Activated CD4-positive, alpha-beta T cell treated with anti-CD3 and anti-CD28 coated beads for 36 hours (primary cell): ENCODE measurements at regions of chr3 and their contacts with region 1.

Region 1: GRCh38 chr3:181700168-181701087 is 11.3 kb upstream of the SOX2 start:
- DNase-seq: peak; percentile 72
- ATAC-seq: peak; percentile 55
- H3K4me3 Mint-ChIP-seq: no peak overlapping the region
- H3K27ac Mint-ChIP-seq: no peak overlapping the region
- H3K4me1 Mint-ChIP-seq: peaks cover 17% of the 10 kb centered on the region
- H3K27me3 Mint-ChIP-seq: peaks cover 78% of the 10 kb centered on the region

Region 2: GRCh38 chr3:180802837-180803236 is 897.6 kb before region 1 on chr3:
- CTCF ChIA-PET with region 1: no interaction called
- POLR2A ChIA-PET with region 1: no interaction called
- intact Hi-C with region 1: loop called in 1 of 2 experiments (anchors 5 kb)
- DNase-seq: no peak
- ATAC-seq: no peak
- H3K4me3 Mint-ChIP-seq: no peak overlapping the region
- H3K27ac Mint-ChIP-seq: no peak overlapping the region
- H3K4me1 Mint-ChIP-seq: no peaks in the 10 kb centered on the region
- H3K27me3 Mint-ChIP-seq: peaks cover 2% of the 10 kb centered on the region

Region 3: DNA sequence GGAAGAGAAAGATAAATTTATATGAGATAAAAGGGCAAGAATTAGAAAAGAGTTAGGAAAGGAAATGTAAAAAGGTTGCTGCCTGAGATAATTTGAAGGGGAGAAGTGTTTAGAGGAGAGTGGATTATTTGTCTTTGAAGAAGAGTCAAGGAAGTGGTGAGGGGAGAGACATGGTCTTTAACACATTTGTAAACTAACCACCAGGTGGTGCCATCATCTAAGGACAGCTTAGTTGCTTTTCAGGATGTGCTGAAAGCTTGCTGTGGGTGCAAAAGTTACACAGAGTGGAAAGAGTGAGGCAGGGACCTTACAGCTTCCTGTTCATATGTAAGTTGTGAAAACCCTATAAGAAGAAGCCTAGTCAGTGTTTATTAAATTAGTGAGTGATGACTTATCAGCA is 596.8 kb before region 1 on chr3:
- CTCF ChIA-PET with region 1: no interaction called
- POLR2A ChIA-PET with region 1: no interaction called
- intact Hi-C with region 1: loop called in 1 of 2 experiments (anchors 5 kb)
- DNase-seq: peak; percentile 29
- ATAC-seq: peak; percentile 39
- H3K4me3 Mint-ChIP-seq: no peak overlapping the region
- H3K27ac Mint-ChIP-seq: no peak overlapping the region
- H3K4me1 Mint-ChIP-seq: no peaks in the 10 kb centered on the region
- H3K27me3 Mint-ChIP-seq: no peaks in the 10 kb centered on the region

Region 4: GRCh38 chr3:181210275-181210674 is 490.2 kb before region 1 on chr3:
- CTCF ChIA-PET with region 1: interaction called, 4 read pairs
- POLR2A ChIA-PET with region 1: no interaction called
- intact Hi-C with region 1: loop called (anchors 1 to 5 kb)
- DNase-seq: no peak
- ATAC-seq: no peak
- H3K4me3 Mint-ChIP-seq: no peak overlapping the region
- H3K27ac Mint-ChIP-seq: no peak overlapping the region
- H3K4me1 Mint-ChIP-seq: no peaks in the 10 kb centered on the region
- H3K27me3 Mint-ChIP-seq: peaks cover 2% of the 10 kb centered on the region

Region 5: DNA sequence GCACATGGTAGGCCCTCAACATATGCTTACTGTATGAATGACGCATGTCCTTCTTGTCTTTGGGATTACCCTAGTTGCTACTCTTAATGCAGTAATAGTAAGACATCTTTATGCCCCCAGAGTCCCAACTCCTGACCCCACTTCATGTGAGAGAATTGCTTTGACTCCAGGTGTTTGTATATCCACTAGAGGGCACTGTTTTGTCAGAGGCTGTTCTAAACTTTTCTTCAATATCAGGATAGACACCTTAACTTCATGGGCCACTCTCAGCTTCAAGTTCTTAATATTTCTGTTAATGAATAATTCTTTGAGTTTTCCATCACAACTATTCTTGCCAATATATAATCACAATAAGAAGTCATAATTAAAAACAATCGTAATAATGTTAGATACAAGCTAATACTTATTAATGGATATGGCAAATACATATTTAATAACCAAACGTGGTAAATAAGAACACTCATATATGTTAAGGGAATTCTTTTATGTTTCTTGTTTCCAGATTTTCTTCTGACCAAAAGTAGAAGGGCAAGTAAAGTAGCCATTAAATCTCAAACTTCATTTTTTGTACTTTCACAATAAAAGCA is 373.7 kb before region 1 on chr3:
- CTCF ChIA-PET with region 1: interaction called, 5 read pairs
- POLR2A ChIA-PET with region 1: no interaction called
- intact Hi-C with region 1: loop called (anchors 1 to 5 kb)
- DNase-seq: no peak
- ATAC-seq: no peak
- H3K4me3 Mint-ChIP-seq: no peak overlapping the region
- H3K27ac Mint-ChIP-seq: no peak overlapping the region
- H3K4me1 Mint-ChIP-seq: no peaks in the 10 kb centered on the region
- H3K27me3 Mint-ChIP-seq: peaks cover 3% of the 10 kb centered on the region

Region 6: DNA sequence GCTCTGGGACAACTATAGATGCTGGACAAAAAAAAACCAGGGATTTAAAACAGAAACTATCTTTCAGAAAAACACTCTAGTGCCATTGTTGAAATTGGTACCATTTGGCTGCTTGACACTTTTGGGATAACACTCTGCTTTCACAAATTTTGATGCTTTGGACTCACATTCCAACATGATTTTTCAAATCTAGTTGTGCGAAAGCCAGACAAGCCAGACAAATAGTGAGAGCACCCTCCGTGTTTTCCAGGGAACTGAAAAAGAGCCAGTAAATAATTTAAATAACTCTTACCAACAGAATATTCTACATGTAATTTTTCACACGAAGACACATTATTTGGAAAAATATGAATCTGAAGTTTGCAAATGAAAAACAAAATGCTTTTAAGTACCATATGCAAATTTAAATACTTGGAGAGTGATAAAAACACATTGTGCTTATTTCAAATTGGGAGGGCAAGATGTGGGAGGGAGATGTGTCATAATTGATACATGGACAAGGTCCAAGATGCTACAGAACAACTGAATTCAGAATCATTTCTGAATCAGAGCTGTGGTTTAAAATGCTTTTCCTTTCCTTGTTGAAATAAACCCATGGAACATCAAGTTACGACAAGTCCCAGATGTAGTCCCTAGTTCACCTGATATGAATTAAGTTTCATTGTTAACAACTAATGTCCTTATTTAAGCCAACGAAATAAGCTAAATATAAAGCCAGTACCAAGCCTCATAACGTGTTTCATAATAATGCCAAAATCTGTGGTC is 132.9 kb before region 1 on chr3:
- CTCF ChIA-PET with region 1: no interaction called
- POLR2A ChIA-PET with region 1: no interaction called
- intact Hi-C with region 1: no loop called
- DNase-seq: no peak
- ATAC-seq: no peak
- H3K4me3 Mint-ChIP-seq: no peak overlapping the region
- H3K27ac Mint-ChIP-seq: no peak overlapping the region
- H3K4me1 Mint-ChIP-seq: no peaks in the 10 kb centered on the region
- H3K27me3 Mint-ChIP-seq: no peaks in the 10 kb centered on the region

Region 7: GRCh38 chr3:181726351-181727330 is 26.2 kb after region 1 on chr3:
- CTCF ChIA-PET with region 1: interaction called, 16 read pairs
- POLR2A ChIA-PET with region 1: no interaction called
- intact Hi-C with region 1: no loop called
- DNase-seq: no peak
- ATAC-seq: no peak
- H3K4me3 Mint-ChIP-seq: peak overlapping the region; percentile 35
- H3K27ac Mint-ChIP-seq: no peak overlapping the region
- H3K4me1 Mint-ChIP-seq: peaks cover 12% of the 10 kb centered on the region
- H3K27me3 Mint-ChIP-seq: peaks cover 88% of the 10 kb centered on the region

Region 8: DNA sequence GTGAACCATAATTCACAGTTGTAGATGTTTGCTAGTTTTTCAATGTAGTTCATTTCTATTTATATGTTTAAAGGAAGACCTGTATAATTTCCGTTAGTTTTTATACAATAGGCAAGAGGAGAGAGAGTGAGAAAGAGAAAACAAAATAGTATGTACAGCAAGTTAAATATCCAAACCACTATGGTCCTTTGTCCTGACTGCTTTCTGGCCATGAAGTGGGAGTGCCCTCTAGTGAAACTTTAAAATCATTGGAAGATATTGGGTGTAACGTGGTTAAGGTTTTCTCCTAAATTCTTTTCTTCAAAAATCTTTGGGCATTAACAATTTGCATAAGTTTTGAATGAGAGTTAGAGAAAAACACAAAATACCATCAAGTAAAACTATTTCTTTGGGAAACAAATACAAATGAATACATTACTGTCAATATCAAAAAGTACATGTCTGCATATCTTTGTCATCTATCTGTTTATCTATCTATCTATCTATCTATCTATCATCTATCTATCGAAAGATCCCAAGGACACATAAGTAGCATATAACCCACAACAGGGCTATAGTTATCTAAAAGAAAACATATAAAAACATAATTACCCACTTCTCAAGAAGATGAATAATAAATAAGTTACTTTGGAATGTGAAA is 558.2 kb after region 1 on chr3:
- CTCF ChIA-PET with region 1: no interaction called
- POLR2A ChIA-PET with region 1: no interaction called
- intact Hi-C with region 1: loop called in 1 of 2 experiments (anchors 10 kb)
- DNase-seq: no peak
- ATAC-seq: no peak
- H3K4me3 Mint-ChIP-seq: no peak overlapping the region
- H3K27ac Mint-ChIP-seq: no peak overlapping the region
- H3K4me1 Mint-ChIP-seq: no peaks in the 10 kb centered on the region
- H3K27me3 Mint-ChIP-seq: peaks cover 8% of the 10 kb centered on the region